ENCODE measurements at regions of chr1 and their contacts with region 1.

Region 1: GRCh38 chr1:107590900-107591633 is 373.9 kb downstream of the VAV3 start:
- DNase-seq: no peak
- ATAC-seq: no peak
- H3K4me3 ChIP-seq: no peak overlapping the region
- H3K27ac ChIP-seq: no peak overlapping the region
- H3K4me1 ChIP-seq: peaks cover 34% of the 10 kb centered on the region
- H3K27me3 ChIP-seq: no peaks in the 10 kb centered on the region
- CTCF ChIP-seq: no peak

Region 2: GRCh38 chr1:107512836-107513235 is 78.2 kb before region 1 on chr1:
- CTCF ChIA-PET with region 1: no interaction called
- POLR2A ChIA-PET with region 1: no interaction called
- intact Hi-C with region 1: no loop called
- DNase-seq: no peak
- ATAC-seq: no peak
- H3K4me3 ChIP-seq: no peak overlapping the region
- H3K27ac ChIP-seq: no peak overlapping the region
- H3K4me1 ChIP-seq: no peaks in the 10 kb centered on the region
- H3K27me3 ChIP-seq: no peaks in the 10 kb centered on the region
- CTCF ChIP-seq: no peak

Region 3: DNA sequence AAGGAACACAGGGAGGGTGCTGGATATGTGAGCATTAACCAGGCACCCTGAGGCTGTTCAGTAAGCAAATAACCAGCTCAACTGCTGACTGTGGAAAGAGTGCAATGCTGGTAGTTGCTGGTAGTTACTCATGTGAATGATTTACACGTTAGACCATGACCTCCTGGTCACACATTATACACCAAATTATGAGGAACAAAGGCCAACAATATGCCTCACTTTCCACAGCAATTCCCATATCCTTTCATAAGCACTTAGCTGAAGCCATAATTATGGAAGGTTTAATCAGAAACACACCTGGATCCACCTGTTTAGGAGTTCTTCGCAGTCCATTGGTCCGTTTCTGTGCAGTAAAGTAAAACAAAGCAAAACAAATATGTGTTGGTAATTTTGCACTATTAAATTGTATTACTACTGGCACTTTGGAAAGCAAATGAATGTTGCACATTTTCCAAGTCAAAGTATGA is 92.2 kb after region 1 on chr1:
- CTCF ChIA-PET with region 1: interaction called, 3 read pairs
- POLR2A ChIA-PET with region 1: no interaction called
- intact Hi-C with region 1: loop called (anchors 5 kb)
- DNase-seq: peak; percentile 85
- ATAC-seq: peak; percentile 89
- H3K4me3 ChIP-seq: peak overlapping the region; percentile 38; the same call in 1 of the 2 replicates
- H3K27ac ChIP-seq: peak overlapping the region; percentile 92
- H3K4me1 ChIP-seq: peaks cover 41% of the 10 kb centered on the region
- H3K27me3 ChIP-seq: no peaks in the 10 kb centered on the region
- CTCF ChIP-seq: no peak